Mammary epithelial cell (primary cell): ENCODE measurements at regions of chr15 and their contacts with region 1.

Region 1: DNA sequence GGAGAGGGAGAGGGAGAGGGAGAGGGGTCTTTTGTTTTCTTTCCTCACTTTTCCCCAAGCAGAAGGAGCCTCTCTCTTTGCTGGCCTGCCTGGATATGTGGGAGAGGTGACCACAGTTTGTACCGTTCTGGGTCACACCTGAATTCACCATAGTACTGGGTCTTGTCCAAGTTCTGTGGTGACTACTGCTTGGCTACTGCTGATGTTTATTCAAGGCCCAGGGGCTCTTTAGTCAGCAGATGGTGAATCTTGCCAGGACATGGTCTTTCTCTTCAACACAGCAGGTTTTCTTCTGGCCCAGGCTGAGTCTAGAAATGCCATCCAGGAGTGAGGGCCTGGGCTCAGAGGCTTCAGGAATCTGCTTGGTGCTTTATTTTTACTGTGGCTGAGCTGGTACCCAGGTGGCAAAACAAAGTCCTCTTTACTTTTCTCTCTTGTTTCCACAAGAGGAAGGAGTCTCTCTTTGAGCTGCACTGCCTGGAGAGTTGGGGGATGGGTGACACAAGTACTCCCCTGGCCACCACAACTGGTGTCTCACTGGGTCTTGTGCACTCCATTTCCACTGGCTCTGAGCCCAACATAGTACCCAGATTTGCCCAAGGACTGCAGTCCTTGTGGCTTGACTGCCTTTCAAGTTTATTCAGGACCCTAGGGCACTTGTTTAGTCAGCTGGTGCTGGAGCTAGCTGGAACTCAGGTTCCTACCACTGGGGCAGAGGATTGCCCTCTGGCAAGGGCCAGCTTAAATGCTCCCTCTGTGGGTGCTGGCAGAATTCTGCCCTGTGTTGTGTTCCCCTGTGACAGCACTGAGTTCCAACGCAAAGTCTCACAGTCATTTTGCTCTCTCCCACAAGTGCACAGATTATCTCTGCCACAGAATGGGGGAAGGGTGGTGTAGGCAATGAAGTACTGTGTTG is 16.8 kb upstream of the CCNDBP1 start:
- DNase-seq: peak; percentile 95
- H3K4me3 ChIP-seq: no peak overlapping the region
- H3K27ac ChIP-seq: peak overlapping the region; percentile 59
- H3K4me1 ChIP-seq: peaks cover 24% of the 10 kb centered on the region
- H3K27me3 ChIP-seq: no peaks in the 10 kb centered on the region
- CTCF ChIP-seq: peak in 1 of 2 donors; percentile 16

Region 2: GRCh38 chr15:43121863-43122262 is 46.6 kb before region 1 on chr15:
- CTCF ChIA-PET with region 1: no interaction called
- dilution Hi-C with region 1: no loop called
- in situ Hi-C with region 1: no loop called
- intact Hi-C with region 1: loop called (anchors 5 kb)
- DNase-seq: no peak
- H3K4me3 ChIP-seq: no peak overlapping the region
- H3K27ac ChIP-seq: peak overlapping the region; percentile 89
- H3K4me1 ChIP-seq: peaks cover 6% of the 10 kb centered on the region
- H3K27me3 ChIP-seq: peaks cover 2% of the 10 kb centered on the region
- CTCF ChIP-seq: no peak

Region 3: GRCh38 chr15:43214592-43215295 is 46.3 kb after region 1 on chr15:
- CTCF ChIA-PET with region 1: no interaction called
- dilution Hi-C with region 1: no loop called
- in situ Hi-C with region 1: no loop called
- intact Hi-C with region 1: no loop called
- DNase-seq: no peak
- H3K4me3 ChIP-seq: no peak overlapping the region
- H3K27ac ChIP-seq: no peak overlapping the region
- H3K4me1 ChIP-seq: peaks cover 10% of the 10 kb centered on the region
- H3K27me3 ChIP-seq: no peaks in the 10 kb centered on the region
- CTCF ChIP-seq: no peak